Activated naive CD4-positive, alpha-beta T cell treated with anti-CD3 and anti-CD28 coated beads for 36 hours (primary cell): ENCODE measurements at regions of chr11 and their contacts with region 1.

Region 1: DNA sequence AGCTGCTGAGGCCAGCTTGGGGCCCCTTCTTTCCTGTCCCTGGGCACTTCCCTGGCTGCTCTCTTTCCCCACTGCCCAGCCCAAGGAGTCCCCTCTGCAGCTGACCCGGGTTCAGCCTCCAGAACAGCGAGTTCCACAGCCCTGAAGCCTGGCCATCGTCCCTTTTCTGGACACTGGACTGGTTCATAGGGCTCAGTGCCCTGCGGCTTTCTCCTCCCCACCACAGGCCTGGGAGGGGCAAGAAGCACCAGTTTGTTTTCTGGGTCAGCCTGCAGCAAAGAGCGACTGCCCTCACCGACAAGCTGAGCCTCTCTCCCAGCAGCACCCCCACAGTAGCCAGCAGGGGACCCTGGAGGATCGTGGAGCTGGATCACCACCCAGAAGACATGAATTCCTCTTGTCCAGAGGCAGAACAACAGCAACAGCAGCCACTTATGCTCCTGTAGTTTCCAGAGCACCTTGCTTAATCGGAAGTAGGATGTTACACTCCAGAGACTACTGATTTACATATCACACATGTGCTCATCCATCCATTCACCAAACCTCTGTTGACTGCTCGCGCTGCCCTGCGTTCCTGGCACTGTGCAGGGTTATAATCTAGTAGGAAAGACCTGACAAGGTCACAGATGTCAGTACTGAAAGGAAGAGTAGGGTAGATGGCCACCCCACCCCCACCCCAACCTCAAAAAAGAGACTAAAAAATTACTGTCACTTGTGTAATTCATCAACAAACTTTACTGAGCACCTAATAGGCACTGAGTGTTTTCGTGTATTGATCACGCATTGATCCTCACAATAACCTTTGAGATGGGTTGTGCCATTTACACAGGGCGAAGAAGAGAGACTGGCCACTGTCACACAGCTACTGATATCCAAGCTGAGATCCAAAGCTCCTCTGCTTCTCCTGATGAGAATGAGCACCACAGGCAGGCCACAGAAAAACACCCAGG is 13.0 kb upstream of the CXCR5 start:
- DNase-seq: peak; percentile 80
- H3K4me3 Mint-ChIP-seq: peak overlapping the region; percentile 85
- H3K27ac Mint-ChIP-seq: peak overlapping the region; percentile 100
- H3K4me1 Mint-ChIP-seq: peaks cover 67% of the 10 kb centered on the region
- H3K27me3 Mint-ChIP-seq: no peaks in the 10 kb centered on the region

Region 2: DNA sequence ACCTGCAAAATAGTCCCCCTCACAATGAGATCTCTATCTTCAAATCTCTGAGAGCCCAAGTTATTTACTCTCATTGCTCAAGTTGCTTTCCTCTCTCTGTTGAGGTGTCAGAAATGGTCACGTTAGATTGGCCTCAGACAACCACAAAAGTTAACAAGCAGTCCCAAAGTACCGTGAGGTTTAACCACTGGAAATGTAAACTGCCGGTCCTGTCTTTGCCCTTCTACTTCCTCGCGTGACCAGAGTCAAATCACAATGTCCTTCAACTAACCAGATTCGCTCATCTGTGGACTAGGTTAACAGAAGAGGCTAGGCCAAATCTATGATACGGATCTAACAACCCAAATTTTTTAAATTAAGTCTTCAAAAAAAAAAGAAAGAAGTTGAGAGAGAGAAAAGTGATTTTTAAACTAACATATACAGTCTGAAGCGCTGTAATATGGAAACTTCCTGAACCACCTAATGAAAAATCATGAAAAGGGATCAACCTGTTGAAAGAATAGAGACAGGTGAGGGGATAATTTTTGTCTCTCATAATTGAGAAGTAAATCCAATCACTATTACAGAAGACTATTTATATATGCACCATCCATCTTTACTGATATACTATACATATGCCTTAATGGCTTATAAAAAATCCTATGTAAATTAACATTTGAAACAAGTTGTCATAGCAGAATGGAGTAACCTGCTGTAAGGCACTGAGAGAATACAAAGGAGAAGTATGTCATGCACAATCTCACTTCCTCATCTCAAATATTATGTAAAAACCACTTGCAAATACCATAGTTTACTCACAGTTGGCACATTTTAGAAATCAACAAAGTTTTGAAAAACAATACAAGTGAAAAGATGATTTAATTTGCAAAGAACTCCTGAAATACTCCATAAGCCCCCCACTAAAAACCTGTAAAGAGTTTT is 642.5 kb before region 1 on chr11:
- CTCF ChIA-PET with region 1: no interaction called
- intact Hi-C with region 1: loop called (anchors 10 kb)
- DNase-seq: peak; percentile 30
- H3K4me3 Mint-ChIP-seq: peak overlapping the region; percentile 3
- H3K27ac Mint-ChIP-seq: peak overlapping the region; percentile 89
- H3K4me1 Mint-ChIP-seq: peaks cover 20% of the 10 kb centered on the region
- H3K27me3 Mint-ChIP-seq: no peaks in the 10 kb centered on the region

Region 3: DNA sequence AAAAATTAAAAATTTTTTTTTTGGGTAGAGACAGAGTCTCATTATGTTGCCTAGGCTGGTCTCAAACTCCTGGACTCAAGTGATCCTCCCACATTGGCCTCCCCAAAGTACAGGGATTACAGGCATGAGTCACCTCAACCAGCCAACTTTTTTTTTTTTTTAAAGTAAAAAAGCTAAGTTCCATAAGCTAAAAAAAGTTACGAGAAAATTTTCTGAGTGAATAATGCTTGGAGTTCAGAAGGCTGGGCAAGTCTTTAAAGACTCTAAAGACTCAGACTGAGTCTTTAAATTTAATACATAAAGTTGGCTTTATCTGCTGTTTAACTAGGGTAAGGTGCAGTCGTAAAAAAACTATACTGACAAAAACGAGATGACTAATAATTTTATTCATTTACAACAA is 85.3 kb before region 1 on chr11:
- CTCF ChIA-PET with region 1: interaction called, 42 read pairs
- intact Hi-C with region 1: loop called (anchors 1 kb)
- DNase-seq: peak; percentile 52
- H3K4me3 Mint-ChIP-seq: peak overlapping the region; percentile 42
- H3K27ac Mint-ChIP-seq: peak overlapping the region; percentile 81
- H3K4me1 Mint-ChIP-seq: peaks cover 54% of the 10 kb centered on the region
- H3K27me3 Mint-ChIP-seq: no peaks in the 10 kb centered on the region

Region 4: GRCh38 chr11:118806400-118806799 is 64.3 kb before region 1 on chr11:
- CTCF ChIA-PET with region 1: no interaction called
- intact Hi-C with region 1: no loop called
- DNase-seq: no peak
- H3K4me3 Mint-ChIP-seq: no peak overlapping the region
- H3K27ac Mint-ChIP-seq: no peak overlapping the region
- H3K4me1 Mint-ChIP-seq: peaks cover 10% of the 10 kb centered on the region
- H3K27me3 Mint-ChIP-seq: no peaks in the 10 kb centered on the region

Region 5: DNA sequence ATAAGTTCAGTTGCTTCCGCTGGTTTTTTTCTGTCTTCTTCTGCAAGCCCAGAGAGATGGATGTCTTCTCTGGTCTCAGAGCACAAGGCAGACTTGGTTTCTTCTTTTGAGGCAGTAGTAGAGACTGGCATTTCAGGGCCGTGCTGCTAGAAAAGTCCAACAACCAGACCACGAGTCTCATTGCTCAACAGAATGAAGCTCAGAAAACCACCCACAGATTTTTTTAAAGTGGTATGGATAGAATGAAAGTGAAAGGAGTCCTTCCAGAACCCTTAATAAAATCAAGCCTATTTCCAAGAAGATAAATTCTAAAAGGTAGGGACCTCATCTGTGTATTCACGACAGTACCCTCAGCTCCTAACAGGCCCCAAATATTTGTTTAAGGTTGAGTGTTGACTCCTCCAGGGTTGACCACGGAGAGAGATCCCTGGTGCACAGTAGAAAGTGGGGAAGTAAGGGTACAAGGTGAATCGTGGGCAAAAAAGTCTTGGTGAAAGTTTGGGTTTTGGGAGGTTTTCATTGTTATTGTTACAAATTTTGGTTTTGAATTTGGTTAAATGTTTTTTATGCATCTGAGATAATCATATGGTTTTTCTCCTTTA is 36.1 kb before region 1 on chr11:
- CTCF ChIA-PET with region 1: interaction called, 12 read pairs
- intact Hi-C with region 1: no loop called
- DNase-seq: no peak
- H3K4me3 Mint-ChIP-seq: peak overlapping the region; percentile 10
- H3K27ac Mint-ChIP-seq: peak overlapping the region; percentile 63
- H3K4me1 Mint-ChIP-seq: peaks cover 30% of the 10 kb centered on the region
- H3K27me3 Mint-ChIP-seq: no peaks in the 10 kb centered on the region

Region 6: GRCh38 chr11:118845369-118845768 is 25.3 kb before region 1 on chr11:
- CTCF ChIA-PET with region 1: interaction called, 4 read pairs
- intact Hi-C with region 1: loop called (anchors 1 kb)
- DNase-seq: peak; percentile 69
- H3K4me3 Mint-ChIP-seq: no peak overlapping the region
- H3K27ac Mint-ChIP-seq: peak overlapping the region; percentile 63
- H3K4me1 Mint-ChIP-seq: peaks cover 38% of the 10 kb centered on the region
- H3K27me3 Mint-ChIP-seq: no peaks in the 10 kb centered on the region

Region 7: GRCh38 chr11:118883368-118884071 is 12.8 kb after region 1 on chr11 and contains the start of gene CXCR5:
- CTCF ChIA-PET with region 1: interaction called, 11 read pairs
- intact Hi-C with region 1: loop called (anchors 1 kb)
- DNase-seq: peak; percentile 87
- H3K4me3 Mint-ChIP-seq: peak within 1 kb of the TSS; percentile 83
- H3K27ac Mint-ChIP-seq: peak within 1 kb of the TSS; percentile 99
- H3K4me1 Mint-ChIP-seq: peaks cover 84% of the 10 kb centered on the region
- H3K27me3 Mint-ChIP-seq: no peaks in the 10 kb centered on the region
- total RNA-seq, gene CXCR5: 25.6 to 26.1 TPM

Region 8: GRCh38 chr11:118895142-118896039 is 24.7 kb after region 1 on chr11:
- CTCF ChIA-PET with region 1: interaction called, 11 read pairs
- intact Hi-C with region 1: loop called (anchors 1 kb)
- DNase-seq: peak; percentile 95
- H3K4me3 Mint-ChIP-seq: peak overlapping the region; percentile 72
- H3K27ac Mint-ChIP-seq: peak overlapping the region; percentile 97
- H3K4me1 Mint-ChIP-seq: peaks cover 78% of the 10 kb centered on the region
- H3K27me3 Mint-ChIP-seq: no peaks in the 10 kb centered on the region

Region 9: DNA sequence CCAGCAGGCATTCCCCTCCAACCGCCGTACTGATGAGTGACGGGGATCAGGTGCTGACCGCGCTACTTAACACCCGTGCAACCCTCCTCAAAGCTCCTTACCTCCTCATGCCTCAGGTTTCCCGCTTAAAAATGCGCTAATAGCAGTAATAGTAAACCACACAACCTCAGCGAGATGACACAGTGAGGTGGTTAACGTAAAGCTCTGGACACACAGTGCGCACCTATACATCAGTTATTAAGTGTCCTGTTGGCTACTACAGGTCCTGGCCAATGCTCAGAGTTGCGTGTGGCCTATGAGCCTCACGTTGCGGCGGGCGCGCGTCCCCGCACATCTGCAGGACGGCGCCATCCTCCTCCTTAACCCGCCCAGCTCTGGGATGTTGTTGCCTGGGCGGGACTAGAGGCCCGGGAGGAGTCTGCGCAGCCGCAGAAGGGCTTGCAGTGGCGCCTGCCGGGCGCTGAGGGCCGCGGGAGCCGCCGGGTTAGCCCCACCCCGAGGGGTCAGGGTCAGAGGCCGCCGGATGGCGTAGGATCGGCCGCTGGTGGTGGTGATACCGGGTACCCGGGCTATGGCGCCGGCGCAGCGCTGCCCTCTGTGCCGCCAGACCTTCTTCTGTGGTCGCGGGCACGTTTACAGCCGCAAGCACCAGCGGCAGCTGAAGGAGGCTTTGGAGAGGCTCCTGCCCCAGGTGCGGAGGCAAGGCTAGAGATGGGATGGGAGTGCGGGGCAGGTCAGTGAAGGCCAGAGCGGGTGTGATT is 127.1 kb after region 1 on chr11 and contains the start of gene CENATAC:
- CTCF ChIA-PET with region 1: no interaction called
- intact Hi-C with region 1: no loop called
- DNase-seq: peak; percentile 98
- H3K4me3 Mint-ChIP-seq: peak within 1 kb of the TSS; percentile 88
- H3K27ac Mint-ChIP-seq: peak within 1 kb of the TSS; percentile 96
- H3K4me1 Mint-ChIP-seq: peaks cover 33% of the 10 kb centered on the region
- H3K27me3 Mint-ChIP-seq: no peaks in the 10 kb centered on the region
- total RNA-seq, gene CENATAC: 17.4 to 18.0 TPM